IMR-90 (cell line): ENCODE measurements at regions of chr6 and their contacts with region 1.

Region 1: DNA sequence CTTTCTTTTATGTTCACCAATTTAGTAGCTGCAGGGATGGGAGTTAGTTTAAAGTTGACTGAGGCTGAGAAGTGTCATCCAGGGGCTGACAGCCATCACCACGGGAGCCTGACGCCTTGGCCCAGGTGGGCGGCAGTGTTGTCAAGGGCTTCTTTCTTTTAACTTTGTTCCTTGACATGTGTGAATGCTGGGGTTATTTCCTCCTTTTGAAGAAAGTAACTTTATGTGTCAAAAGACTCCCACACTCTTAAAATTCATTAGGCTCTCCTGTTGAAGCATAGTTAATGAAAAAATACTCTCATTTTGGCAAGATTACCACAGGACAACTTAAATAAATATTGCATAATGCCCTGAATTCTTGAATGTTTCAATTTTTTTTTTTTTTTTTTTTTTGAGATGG is 50.0 kb downstream of the SASH1 start:
- DNase-seq: no peak
- ATAC-seq: no peak
- H3K4me3 ChIP-seq: no peak overlapping the region
- H3K27ac ChIP-seq: peak overlapping the region; percentile 50; the same call in 1 of the 2 replicates
- H3K4me1 ChIP-seq: peaks cover 7% of the 10 kb centered on the region
- H3K27me3 ChIP-seq: no peaks in the 10 kb centered on the region
- CTCF ChIP-seq: no peak
- POLR2A ChIP-seq: no peak
- RAD21 ChIP-seq: no peak

Region 2: GRCh38 chr6:148240461-148240840 is 152.2 kb before region 1 on chr6:
- CTCF ChIA-PET with region 1: no interaction called
- POLR2A ChIA-PET with region 1: no interaction called
- dilution Hi-C with region 1: no loop called
- in situ Hi-C with region 1: no loop called
- intact Hi-C with region 1: no loop called
- DNase-seq: peak; percentile 86
- ATAC-seq: peak; percentile 75
- H3K4me3 ChIP-seq: no peak overlapping the region
- H3K27ac ChIP-seq: peak overlapping the region; percentile 11; the same call in 1 of the 2 replicates
- H3K4me1 ChIP-seq: peaks cover 14% of the 10 kb centered on the region
- H3K27me3 ChIP-seq: no peaks in the 10 kb centered on the region
- CTCF ChIP-seq: no peak
- POLR2A ChIP-seq: no peak
- RAD21 ChIP-seq: no peak

Region 3: DNA sequence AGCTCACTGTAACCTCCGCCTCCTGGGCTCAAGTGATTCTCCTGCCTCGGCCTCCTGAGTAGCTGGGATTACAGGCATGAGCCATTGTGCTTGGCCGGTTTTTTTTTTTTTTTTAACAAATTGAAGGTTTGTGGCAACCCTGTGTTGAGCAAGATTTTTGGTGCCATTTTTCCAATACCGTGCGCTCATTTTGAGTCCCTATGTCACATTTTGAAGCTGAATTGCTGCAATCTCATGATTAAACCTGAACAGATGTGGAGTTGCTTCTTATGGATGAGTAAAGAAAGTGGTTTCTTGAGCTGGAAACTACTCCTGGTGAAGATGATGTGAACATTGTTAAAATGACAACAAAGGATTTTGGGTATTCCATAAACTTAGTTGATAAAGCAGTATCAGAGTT is 33.4 kb before region 1 on chr6:
- CTCF ChIA-PET with region 1: no interaction called
- POLR2A ChIA-PET with region 1: no interaction called
- dilution Hi-C with region 1: no loop called
- in situ Hi-C with region 1: no loop called
- intact Hi-C with region 1: loop called (anchors 1 kb)
- DNase-seq: no peak
- ATAC-seq: no peak
- H3K4me3 ChIP-seq: no peak overlapping the region
- H3K27ac ChIP-seq: no peak overlapping the region
- H3K4me1 ChIP-seq: no peaks in the 10 kb centered on the region
- H3K27me3 ChIP-seq: no peaks in the 10 kb centered on the region
- CTCF ChIP-seq: no peak
- POLR2A ChIP-seq: no peak
- RAD21 ChIP-seq: no peak